Posterior cingulate gyrus (tissue), 11 donors: ENCODE measurements at regions of chr5 and their contacts with region 1.

Region 1: DNA sequence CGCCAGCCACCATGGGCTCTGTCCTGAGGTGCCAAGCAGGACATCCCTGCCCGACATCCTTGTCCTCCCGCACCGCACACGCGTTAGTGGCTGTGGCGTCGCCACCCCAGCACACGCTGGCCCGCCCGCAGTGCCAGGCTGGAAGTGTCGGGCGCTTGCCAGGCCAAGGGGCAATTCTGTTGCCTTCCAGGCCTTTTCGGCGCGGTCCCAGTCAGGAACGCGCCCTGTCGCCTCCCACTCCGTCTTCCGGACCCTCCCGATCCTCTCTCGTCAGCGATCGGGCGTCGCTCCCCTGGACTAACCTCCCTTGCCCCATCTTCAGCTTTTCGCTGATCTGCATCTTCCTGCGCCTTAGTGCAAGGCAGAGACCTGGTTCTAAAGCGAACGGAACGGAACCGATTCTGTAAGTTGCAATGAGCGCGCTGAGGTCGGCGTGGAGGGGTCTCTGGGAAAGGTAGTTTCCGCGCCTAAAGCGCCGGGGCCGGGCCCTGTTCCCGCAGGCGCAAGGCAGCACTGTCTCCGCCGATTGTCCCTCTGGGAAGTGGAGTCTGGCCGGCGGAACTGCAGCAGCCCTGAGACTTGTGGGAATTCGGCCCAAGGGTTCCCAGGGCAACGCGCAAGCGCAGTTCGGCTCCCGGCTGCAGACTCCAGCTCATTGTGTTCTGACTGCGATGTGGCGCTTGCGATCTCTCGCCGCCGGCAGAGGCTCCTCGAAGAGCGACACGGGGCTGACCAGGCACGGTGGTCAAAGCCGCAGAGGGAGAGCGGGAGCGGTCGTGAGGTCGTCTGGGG is at the start of gene ZNF454:
- DNase-seq: peak; percentile 93 to 99 (median 96)

Region 2: DNA sequence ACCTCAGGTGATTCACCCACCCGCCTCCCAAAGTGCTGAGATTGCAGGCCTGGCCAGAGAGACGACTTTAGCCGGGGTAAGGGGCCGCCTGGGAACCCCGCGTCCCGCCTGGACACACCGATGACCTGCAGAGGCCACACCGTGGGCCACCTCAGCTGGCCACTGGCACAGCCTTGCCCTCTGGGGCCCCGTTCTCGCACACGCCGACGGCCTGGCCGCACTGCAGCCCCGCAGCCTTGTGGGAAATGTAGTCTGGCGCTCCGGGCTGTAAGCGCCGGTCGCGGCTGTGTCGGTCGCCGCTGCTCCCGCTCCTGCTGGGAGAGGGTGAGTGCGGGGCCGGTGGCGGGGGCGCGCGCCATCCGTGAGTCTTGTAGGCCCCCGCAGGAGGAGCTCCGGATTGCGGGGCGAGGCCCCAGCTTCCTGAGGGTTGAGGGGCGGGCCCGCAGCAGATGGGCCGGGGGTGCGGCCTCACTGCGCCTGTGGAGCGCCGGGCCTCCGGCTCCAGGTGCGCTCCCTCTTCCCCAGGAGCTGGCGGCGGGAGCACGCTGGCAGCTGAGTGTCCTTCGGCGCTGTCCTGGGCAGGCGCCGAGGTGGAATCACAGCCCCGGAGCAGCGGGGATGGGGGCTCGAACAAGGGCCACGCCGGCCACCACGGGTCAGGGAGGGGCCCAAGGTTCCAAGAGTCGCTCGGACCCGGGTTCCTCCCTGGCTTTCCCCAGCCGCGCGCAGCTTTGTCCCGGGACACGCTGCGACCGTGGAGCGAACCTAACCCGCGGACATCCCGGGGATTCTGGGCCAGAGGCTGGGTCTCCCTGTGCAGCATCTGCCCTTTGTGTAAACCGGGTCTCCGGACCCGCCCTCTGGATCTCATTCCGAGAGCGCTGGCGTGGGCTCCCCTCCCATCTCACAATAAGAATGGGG is 44.9 kb before region 1 on chr5 and contains the start of gene ZFP2:
- intact Hi-C with region 1: loop called (anchors 5 kb)
- DNase-seq: peak; percentile 54 to 96 (median 72)

Region 3: GRCh38 chr5:179023528-179024430 is 83.0 kb after region 1 on chr5 and contains the start of gene ZNF879:
- intact Hi-C with region 1: loop called (anchors 2 kb)
- DNase-seq: peak; percentile 91 to 99 (median 96)

Region 4: GRCh38 chr5:179060116-179061008 is 119.6 kb after region 1 on chr5 and contains the start of gene ZNF354C:
- intact Hi-C with region 1: loop called (anchors 1 kb)
- DNase-seq: peak; percentile 78 to 98 (median 87)